ENCODE measurements at regions of chr11 and their contacts with region 1.

Region 1: DNA sequence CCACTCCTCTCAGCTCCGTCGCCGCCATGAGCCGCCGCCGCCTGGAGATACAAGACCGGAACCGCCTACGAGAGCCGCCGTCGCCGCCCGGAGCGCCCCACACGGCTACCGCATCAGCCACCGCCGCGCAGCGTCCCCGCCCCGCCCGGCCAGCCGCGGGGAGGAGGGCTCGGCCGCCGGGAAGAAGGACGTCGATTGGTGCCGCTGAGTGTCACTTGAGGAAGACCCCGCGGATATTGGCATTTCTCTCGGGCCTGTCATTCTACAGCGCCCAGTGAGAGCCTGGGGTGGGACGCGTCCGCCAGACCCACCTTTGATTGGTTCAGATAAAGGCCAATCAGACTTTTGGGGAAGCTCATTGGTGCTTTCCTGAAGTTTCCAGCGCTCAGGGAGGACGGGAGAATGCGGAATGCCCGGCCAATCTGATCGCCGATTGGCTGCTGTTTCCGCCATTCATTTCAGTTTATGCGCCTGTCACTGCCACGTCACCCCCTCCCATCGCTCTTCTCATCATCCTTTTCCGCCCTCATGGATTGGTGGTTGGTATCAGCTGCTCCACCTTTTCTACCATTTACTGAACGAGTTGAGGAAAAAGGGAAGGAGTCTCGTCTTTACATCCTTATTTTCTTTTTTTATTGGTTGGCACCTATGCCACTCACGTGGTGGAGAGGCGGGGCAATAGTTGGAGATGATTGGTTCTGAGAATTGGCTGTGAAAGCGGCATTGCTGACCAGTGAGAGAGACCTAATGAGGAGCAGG is at the start of gene OSBP:
- DNase-seq: peak; percentile 100
- H3K4me3 ChIP-seq: peak within 1 kb of the TSS; percentile 78 to 96 (median 87)
- H3K27ac ChIP-seq: peak within 1 kb of the TSS; percentile 91 to 97 (median 96)
- H3K4me1 ChIP-seq: peaks cover 28 to 49% (median 41%) of the 10 kb centered on the region in 4 donors
- H3K27me3 ChIP-seq: no peaks in the 10 kb centered on the region
- CTCF ChIP-seq: peak in 1 of 3 experiments; percentile 33
- EP300 ChIP-seq: no peak
- POLR2A ChIP-seq: peak; percentile 50
- total RNA-seq, gene OSBP: 32.5 to 40.0 (median 33.3) TPM

Region 2: GRCh38 chr11:59534676-59535075 is 81.1 kb before region 1 on chr11:
- intact Hi-C with region 1: loop called (anchors 10 kb)
- DNase-seq: no peak
- H3K4me3 ChIP-seq: no peak overlapping the region
- H3K27ac ChIP-seq: no peak overlapping the region
- H3K4me1 ChIP-seq: peaks cover 0 to 12% (median 11%) of the 10 kb centered on the region in 4 donors
- H3K27me3 ChIP-seq: peaks cover 0 to 4% (median 0%) of the 10 kb centered on the region in 4 donors
- CTCF ChIP-seq: no peak
- EP300 ChIP-seq: no peak
- POLR2A ChIP-seq: no peak

Region 3: GRCh38 chr11:59560702-59561469 is 54.9 kb before region 1 on chr11:
- intact Hi-C with region 1: loop called (anchors 5 kb)
- DNase-seq: peak; percentile 96
- H3K4me3 ChIP-seq: peak overlapping the region; percentile 67 to 92 (median 74)
- H3K27ac ChIP-seq: peak overlapping the region; percentile 83 to 97 (median 92)
- H3K4me1 ChIP-seq: peaks cover 9 to 45% (median 35%) of the 10 kb centered on the region in 4 donors
- H3K27me3 ChIP-seq: no peaks in the 10 kb centered on the region
- CTCF ChIP-seq: no peak
- EP300 ChIP-seq: no peak
- POLR2A ChIP-seq: no peak

Region 4: DNA sequence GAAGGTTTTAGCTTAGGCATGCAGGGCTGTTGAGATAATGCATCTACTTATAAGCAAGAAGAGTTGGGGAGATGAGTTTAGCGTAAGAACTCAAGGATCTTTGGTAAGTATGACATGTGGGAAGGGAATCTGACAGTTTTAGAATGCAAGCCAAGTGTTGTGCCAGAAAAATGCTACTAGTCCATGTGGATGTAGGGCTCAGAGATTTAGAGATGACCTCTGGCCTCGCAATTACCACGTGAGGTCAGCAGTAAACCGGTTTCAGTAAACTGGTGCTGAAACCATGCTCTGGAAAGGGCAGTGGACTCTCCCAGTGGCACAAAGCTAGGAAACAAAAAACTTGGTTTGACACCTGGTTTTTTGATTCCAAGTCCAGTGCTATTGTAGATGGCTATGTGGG is 175.8 kb after region 1 on chr11:
- intact Hi-C with region 1: no loop called
- DNase-seq: no peak
- H3K4me3 ChIP-seq: no peak overlapping the region
- H3K27ac ChIP-seq: no peak overlapping the region
- H3K4me1 ChIP-seq: peaks cover 0 to 10% (median 5%) of the 10 kb centered on the region in 4 donors
- H3K27me3 ChIP-seq: no peaks in the 10 kb centered on the region
- CTCF ChIP-seq: no peak
- EP300 ChIP-seq: no peak
- POLR2A ChIP-seq: no peak

Measured in esophagus muscularis mucosa (tissue), 4 donors.